ENCODE measurements at regions of chr21 and their contacts with region 1.

Region 1: GRCh38 chr21:44873356-44874239 is at the start of gene PTTG1IP:
- DNase-seq: peak; percentile 100
- ATAC-seq: peak; percentile 82
- H3K4me3 Mint-ChIP-seq: peak within 1 kb of the TSS; percentile 92
- H3K27ac Mint-ChIP-seq: peak within 1 kb of the TSS; percentile 85
- H3K4me1 Mint-ChIP-seq: peaks cover 51% of the 10 kb centered on the region
- H3K27me3 Mint-ChIP-seq: no peaks in the 10 kb centered on the region
- total RNA-seq, gene PTTG1IP: 34.8 to 44.3 TPM

Region 2: GRCh38 chr21:43866260-43866629 is 1007.4 kb before region 1 on chr21:
- CTCF ChIA-PET with region 1: no interaction called
- POLR2A ChIA-PET with region 1: no interaction called
- intact Hi-C with region 1: loop called in 1 of 2 experiments (anchors 10 kb)
- DNase-seq: peak; percentile 81
- ATAC-seq: peak; percentile 56
- H3K4me3 Mint-ChIP-seq: peak overlapping the region; percentile 79
- H3K27ac Mint-ChIP-seq: peak overlapping the region; percentile 95
- H3K4me1 Mint-ChIP-seq: peaks cover 44% of the 10 kb centered on the region
- H3K27me3 Mint-ChIP-seq: no peaks in the 10 kb centered on the region

Region 3: DNA sequence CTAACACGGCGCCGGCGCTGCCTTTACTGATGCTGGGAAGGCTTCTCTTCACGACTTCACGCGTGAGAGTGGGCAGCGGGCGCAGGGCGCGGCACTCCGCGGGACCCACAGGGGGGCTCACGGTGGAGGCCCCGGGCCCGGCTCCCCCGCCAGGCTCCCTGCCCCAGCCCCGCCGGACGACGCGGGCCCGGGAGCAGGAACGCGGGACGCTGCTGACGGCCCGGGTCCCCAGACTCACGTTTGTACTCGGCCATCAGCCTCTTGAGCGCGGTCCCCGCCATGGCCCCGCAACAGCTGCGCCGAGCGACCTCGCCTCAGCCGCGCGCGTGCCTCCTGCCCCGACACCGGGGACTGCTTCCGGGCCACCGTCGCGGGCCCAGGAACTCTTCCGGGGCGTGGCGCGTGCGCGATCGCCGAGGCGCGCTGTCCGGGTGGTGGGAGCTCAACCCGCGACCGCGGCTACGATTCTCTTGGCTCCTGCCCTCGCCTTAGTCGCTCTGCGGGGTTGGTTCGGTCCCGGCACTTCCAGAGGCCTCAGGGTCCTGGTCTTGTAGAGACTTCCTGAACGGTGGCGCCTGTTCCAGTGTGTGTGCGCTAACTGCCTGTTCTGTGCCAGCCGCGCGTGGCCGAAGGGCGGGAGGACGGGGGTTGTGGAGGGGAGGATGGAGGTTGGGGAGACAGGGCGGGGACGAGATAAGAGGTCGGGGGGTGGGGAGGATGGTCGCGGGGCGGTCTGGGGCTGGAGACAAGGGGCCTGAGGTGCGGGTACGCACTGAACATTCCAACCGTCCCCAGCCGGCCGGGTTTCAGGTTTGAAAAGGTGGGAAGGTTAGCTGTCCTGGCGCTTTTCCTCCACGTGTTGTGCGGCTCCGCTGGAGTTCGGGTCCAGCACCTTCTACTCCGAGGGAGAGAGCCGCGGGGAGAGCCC is 71.9 kb before region 1 on chr21 and contains the start of gene UBE2G2:
- CTCF ChIA-PET with region 1: interaction called, 19 read pairs
- POLR2A ChIA-PET with region 1: interaction called, 6 read pairs
- intact Hi-C with region 1: loop called (anchors 1 to 2 kb)
- DNase-seq: peak; percentile 92
- ATAC-seq: peak; percentile 95
- H3K4me3 Mint-ChIP-seq: peak within 1 kb of the TSS; percentile 94
- H3K27ac Mint-ChIP-seq: peak within 1 kb of the TSS; percentile 90
- H3K4me1 Mint-ChIP-seq: peaks cover 54% of the 10 kb centered on the region
- H3K27me3 Mint-ChIP-seq: no peaks in the 10 kb centered on the region
- total RNA-seq, gene UBE2G2: 103 to 121 TPM

Region 4: GRCh38 chr21:44845399-44846223 is 28.0 kb before region 1 on chr21:
- CTCF ChIA-PET with region 1: interaction called, 4 read pairs
- POLR2A ChIA-PET with region 1: interaction called, 6 read pairs
- intact Hi-C with region 1: loop called in 1 of 2 experiments (anchors 2 kb)
- DNase-seq: peak; percentile 81
- ATAC-seq: peak; percentile 86
- H3K4me3 Mint-ChIP-seq: peak overlapping the region; percentile 64
- H3K27ac Mint-ChIP-seq: peak overlapping the region; percentile 51
- H3K4me1 Mint-ChIP-seq: peaks cover 7% of the 10 kb centered on the region
- H3K27me3 Mint-ChIP-seq: no peaks in the 10 kb centered on the region

Region 5: GRCh38 chr21:44901391-44902074 is 27.9 kb after region 1 on chr21:
- CTCF ChIA-PET with region 1: no interaction called
- POLR2A ChIA-PET with region 1: no interaction called
- intact Hi-C with region 1: no loop called
- DNase-seq: no peak
- ATAC-seq: no peak
- H3K4me3 Mint-ChIP-seq: no peak overlapping the region
- H3K27ac Mint-ChIP-seq: no peak overlapping the region
- H3K4me1 Mint-ChIP-seq: peaks cover 7% of the 10 kb centered on the region
- H3K27me3 Mint-ChIP-seq: no peaks in the 10 kb centered on the region

Region 6: GRCh38 chr21:44927587-44928461 is 54.2 kb after region 1 on chr21:
- CTCF ChIA-PET with region 1: interaction called, 7 read pairs
- POLR2A ChIA-PET with region 1: interaction called, 4 read pairs
- intact Hi-C with region 1: loop called (anchors 1 to 5 kb)
- DNase-seq: peak; percentile 97
- ATAC-seq: peak; percentile 74
- H3K4me3 Mint-ChIP-seq: peak overlapping the region; percentile 90
- H3K27ac Mint-ChIP-seq: peak overlapping the region; percentile 94
- H3K4me1 Mint-ChIP-seq: peaks cover 80% of the 10 kb centered on the region
- H3K27me3 Mint-ChIP-seq: no peaks in the 10 kb centered on the region

Region 7: GRCh38 chr21:45287438-45288391 is 414.1 kb after region 1 on chr21 and contains the start of gene POFUT2:
- CTCF ChIA-PET with region 1: no interaction called
- POLR2A ChIA-PET with region 1: no interaction called
- intact Hi-C with region 1: loop called in 1 of 2 experiments (anchors 5 kb)
- DNase-seq: peak; percentile 99
- ATAC-seq: peak; percentile 86
- H3K4me3 Mint-ChIP-seq: peak within 1 kb of the TSS; percentile 75
- H3K27ac Mint-ChIP-seq: no peak within 1 kb of the TSS
- H3K4me1 Mint-ChIP-seq: peaks cover 15% of the 10 kb centered on the region
- H3K27me3 Mint-ChIP-seq: no peaks in the 10 kb centered on the region
- total RNA-seq, gene POFUT2: 14.7 to 14.9 TPM

Measured in activated CD4-positive, alpha-beta T cell treated with anti-CD3 and anti-CD28 coated beads for 36 hours (primary cell).